ENCODE measurements at regions of chr9 and their contacts with region 1.

Region 1: GRCh38 chr9:84315278-84315877 is 25.2 kb downstream of the SLC28A3 start:
- DNase-seq: peak; percentile 63
- H3K4me3 Mint-ChIP-seq: no peak overlapping the region
- H3K27ac Mint-ChIP-seq: no peak overlapping the region
- H3K4me1 Mint-ChIP-seq: peaks cover 10% of the 10 kb centered on the region
- H3K27me3 Mint-ChIP-seq: no peaks in the 10 kb centered on the region

Region 2: DNA sequence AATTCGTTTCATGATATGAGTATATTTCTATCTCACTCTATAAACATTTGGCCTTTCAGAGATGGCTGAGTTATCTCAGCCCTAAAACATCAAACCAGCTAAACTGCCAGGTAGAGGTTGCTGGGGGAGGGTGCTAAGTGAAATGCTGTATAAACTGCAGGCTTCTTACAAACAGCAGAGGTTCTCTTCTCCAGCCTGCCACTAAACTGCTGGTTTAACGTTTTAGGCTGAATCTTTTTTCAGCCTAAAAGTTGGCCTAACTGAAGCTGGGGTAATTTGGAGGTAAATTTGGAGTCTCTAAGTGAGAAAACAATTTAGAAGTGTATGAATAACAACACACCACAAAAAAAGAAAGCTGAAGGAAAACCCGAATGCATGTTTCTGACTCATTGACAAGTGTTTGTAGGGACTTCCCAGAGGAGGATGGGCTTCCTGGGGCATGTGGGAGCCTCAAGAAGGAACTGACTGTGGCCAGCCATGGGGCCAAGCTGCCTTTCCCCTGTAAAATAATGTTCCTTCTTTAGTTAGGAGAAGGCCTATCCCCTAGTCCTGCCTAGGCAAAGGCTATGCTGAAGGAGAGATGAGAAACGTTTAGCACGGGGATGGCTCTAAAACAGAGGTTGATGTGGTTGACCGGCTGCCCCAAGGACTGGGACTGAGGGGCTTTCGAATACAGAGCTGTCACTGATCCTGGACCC is 19.1 kb before region 1 on chr9:
- CTCF ChIA-PET with region 1: interaction called, 13 read pairs
- POLR2A ChIA-PET with region 1: no interaction called
- DNase-seq: peak; percentile 29
- H3K4me3 Mint-ChIP-seq: peak overlapping the region; percentile 9
- H3K27ac Mint-ChIP-seq: peak overlapping the region; percentile 99
- H3K4me1 Mint-ChIP-seq: peaks cover 63% of the 10 kb centered on the region
- H3K27me3 Mint-ChIP-seq: no peaks in the 10 kb centered on the region

Region 3: DNA sequence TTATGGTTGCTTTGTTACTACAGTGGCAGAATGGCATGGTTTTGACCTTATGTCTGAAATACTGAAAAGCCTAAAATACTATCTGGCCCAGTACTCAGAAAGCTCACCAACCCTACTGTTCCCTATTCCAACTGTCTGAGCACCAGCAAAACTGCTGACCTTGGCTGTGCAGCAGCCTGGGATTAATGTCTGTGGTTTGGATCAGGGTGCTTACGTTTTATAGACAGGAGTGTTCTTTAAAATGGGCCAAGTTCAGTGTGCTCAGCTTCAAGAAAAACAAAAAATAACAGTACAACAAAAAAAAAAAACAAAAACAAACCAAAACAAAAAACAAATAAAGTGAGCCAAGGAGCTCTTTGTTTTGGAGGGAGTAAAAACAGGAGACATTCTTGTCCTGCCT is 11.2 kb before region 1 on chr9:
- CTCF ChIA-PET with region 1: interaction called, 10 read pairs
- POLR2A ChIA-PET with region 1: no interaction called
- DNase-seq: no peak
- H3K4me3 Mint-ChIP-seq: no peak overlapping the region
- H3K27ac Mint-ChIP-seq: no peak overlapping the region
- H3K4me1 Mint-ChIP-seq: peaks cover 13% of the 10 kb centered on the region
- H3K27me3 Mint-ChIP-seq: no peaks in the 10 kb centered on the region

Measured in activated CD4-positive, alpha-beta T cell treated with anti-CD3 and anti-CD28 coated beads, Interleukin-2, amount 10 ng/mL, durations not matched to agents 7 days and 5 days (primary cell).